ENCODE measurements at regions of chr1 and their contacts with region 1.

Region 1: GRCh38 chr1:51421964-51422363 is 91.6 kb upstream of the TTC39A start:
- DNase-seq: no peak
- ATAC-seq: peak; percentile 78

Region 2: GRCh38 chr1:51519048-51519864 is 97.3 kb after region 1 on chr1 and contains the start of gene EPS15:
- intact Hi-C with region 1: loop called (anchors 5 kb)
- DNase-seq: peak; percentile 94
- ATAC-seq: peak; percentile 76
- total RNA-seq, gene EPS15: 72.5 TPM

Measured in Right ventricle myocardium superior (tissue), 1 donor.